Left ventricle myocardium superior (tissue), 1 donor: ENCODE measurements at regions of chr1 and their contacts with region 1.

Region 1: GRCh38 chr1:60031146-60031545 is 42.4 kb downstream of the C1orf87 start:
- DNase-seq: no peak
- ATAC-seq: no peak

Region 2: GRCh38 chr1:60073605-60074278 is 42.6 kb after region 1 on chr1 and contains the start of gene C1orf87:
- intact Hi-C with region 1: loop called (anchors 1 kb)
- DNase-seq: peak; percentile 24
- ATAC-seq: no peak
- total RNA-seq, gene C1orf87: not detected